ENCODE measurements at regions of chr19 and their contacts with region 1.

Region 1: DNA sequence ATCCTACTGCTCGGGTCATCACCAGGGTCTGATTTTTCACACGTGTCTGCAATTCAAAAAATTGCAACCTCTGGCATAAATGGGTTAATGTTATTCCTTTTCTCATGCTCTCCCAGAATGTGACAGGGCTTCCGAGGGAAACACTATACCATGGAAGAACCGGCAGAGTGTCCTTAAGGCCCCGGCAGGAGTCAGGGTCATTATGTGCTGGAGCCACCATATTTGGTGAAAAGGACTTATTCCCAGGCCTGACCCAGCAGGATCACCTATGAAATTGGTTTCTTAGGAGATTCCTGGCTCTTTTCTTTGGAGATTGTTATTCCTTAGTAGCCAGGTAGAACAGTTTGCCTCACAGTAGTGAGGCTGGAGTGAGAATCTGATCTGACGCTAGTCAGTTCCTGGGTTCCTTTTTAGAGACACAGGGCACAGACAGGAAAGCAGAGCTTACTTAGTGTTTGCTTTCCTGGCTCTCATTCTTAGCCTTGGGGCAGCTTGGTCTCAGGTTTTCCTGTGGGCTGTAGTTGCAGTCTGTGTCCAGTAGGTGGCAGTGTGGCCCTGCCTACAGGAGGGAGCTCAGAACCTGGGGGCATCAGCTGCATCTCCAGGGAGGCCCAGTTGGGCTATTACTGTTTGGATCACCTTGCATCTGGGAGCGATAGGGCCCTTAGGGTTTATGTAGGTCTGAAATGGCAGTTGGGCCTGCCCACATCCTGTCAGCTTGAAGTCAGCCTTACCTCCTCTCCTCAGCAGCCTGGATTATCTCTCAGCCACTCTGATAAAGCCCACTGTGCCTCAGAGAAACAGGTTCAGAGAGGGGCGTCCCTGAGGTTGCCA is 12.4 kb downstream of the SNRNP70 start:
- DNase-seq: no peak
- H3K4me3 ChIP-seq: no peak overlapping the region
- H3K27ac ChIP-seq: peak overlapping the region in 2 of 4 donors; percentile 5 to 23
- H3K4me1 ChIP-seq: peaks cover 0 to 29% (median 5%) of the 10 kb centered on the region in 3 donors
- H3K27me3 ChIP-seq: no peaks in the 10 kb centered on the region
- CTCF ChIP-seq: peak; percentile 98 to 100 (median 98)
- POLR2A ChIP-seq: no peak

Region 2: DNA sequence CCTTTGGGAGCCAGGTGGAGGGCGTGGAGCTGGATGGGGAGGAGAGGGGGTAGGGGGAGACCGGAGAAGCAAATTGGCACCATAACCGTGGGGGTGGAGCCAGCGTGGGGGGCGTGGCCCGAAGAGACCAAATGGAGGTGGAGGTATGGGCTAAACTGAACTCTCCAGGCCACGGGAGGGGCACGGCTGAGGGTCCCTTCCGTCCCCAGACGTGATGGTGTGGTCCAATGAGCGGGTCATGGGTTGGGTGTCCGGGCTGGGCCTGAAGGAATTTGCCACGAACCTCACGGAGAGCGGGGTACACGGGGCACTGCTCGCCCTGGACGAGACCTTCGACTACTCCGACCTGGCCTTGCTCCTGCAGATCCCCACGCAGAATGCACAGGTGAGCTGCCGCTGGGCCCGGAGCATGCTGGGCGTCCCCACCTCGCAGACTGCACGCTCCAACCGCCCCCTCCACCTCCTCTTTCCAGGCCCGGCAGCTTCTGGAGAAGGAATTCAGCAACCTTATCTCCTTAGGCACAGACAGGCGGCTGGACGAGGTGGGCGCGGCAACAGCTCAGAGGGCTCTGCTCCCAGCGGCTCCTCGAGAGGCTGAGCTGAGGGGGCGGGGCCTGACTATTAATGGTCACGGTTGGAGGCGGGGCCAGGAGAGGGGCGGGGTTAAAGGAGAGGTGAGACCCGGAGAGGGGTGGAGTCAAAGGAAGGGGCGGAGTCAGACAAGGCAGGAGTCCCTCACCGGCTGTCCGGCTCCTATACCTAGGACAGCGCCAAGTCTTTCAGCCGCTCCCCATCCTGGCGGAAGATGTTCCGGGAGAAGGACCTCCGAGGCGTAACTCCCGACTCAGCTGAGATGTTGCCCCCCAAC is 51.3 kb after region 1 on chr19:
- intact Hi-C with region 1: loop called (anchors 5 kb)
- DNase-seq: no peak
- H3K4me3 ChIP-seq: peak overlapping the region; percentile 46 to 70 (median 64)
- H3K27ac ChIP-seq: peak overlapping the region; percentile 69 to 86 (median 84)
- H3K4me1 ChIP-seq: peaks cover 31 to 57% (median 33%) of the 10 kb centered on the region in 3 donors
- H3K27me3 ChIP-seq: peaks cover 0 to 13% (median 0%) of the 10 kb centered on the region in 4 donors
- CTCF ChIP-seq: no peak
- POLR2A ChIP-seq: peak in 1 of 4 donors; percentile 33